Sciatic nerve (tissue), 2 donors: ENCODE measurements at regions of chr19 and their contacts with region 1.

Region 1: DNA sequence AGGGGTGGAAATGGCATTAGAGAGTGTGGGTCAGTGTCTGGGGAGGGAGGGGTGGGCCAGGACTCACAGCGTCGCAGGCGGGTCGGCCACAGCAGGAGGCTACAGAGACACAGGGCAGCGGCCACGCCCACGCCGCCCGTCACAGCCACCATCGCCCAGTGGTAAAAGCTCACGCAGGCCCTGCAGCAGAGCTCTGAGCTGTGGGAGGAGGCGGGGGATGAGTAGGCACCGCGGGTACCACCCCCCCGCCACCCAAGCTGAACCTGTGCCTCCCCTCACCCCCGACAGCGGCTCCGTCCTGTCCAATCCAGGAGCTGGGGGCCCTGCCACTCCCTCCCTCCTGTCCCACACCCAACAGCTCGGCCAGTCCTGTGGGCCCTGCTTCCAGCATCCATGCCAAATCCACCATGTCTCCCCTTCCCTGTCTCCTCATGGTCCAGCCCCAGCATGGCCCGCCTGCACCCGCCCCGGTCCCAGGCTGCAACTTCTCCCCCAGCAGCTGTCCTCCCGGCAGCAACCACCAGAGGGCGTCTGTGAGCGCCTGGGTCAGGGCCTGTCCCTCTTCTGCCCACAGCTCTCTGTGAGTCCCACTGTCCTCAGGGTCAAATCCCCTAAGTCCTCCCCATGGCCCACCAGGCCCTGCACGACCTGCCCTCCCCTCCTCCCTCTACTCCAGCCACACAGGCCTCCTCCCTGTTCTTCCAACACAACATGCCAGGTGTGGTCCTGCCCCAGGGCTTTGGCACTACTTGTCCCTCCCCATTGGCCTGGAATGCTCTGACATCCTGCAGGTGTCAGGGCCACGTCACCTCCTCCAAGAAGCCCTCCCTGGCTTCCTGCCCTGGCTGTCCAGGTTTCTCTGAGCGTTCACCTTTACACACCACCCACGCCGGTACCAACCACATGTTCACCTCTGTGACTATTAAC is 6.0 kb downstream of the TEKTIP1 start:
- DNase-seq: peak; percentile 88
- ATAC-seq: peak; percentile 59

Region 2: DNA sequence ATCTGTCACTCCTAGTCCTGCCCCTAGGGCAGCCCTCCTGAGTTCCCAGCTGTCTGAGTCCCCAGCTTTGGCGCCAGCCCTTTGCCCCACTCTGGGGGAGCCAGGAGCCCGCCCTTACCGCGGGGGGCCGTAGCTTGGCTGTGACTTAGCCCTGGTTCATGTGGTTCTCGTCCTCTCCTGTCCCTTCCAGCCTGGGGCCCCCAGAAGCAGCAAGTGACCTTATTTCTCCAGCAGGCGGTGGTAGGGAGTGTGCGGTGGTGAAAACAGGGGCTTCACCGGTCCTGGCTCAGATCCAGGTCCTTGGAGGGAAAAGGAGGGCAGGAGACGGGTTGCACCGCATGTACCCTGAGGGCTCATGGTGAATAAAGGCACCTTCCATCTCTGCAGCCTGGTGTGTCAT is 48.2 kb after region 1 on chr19:
- intact Hi-C with region 1: no loop called
- DNase-seq: no peak
- ATAC-seq: no peak

Region 3: DNA sequence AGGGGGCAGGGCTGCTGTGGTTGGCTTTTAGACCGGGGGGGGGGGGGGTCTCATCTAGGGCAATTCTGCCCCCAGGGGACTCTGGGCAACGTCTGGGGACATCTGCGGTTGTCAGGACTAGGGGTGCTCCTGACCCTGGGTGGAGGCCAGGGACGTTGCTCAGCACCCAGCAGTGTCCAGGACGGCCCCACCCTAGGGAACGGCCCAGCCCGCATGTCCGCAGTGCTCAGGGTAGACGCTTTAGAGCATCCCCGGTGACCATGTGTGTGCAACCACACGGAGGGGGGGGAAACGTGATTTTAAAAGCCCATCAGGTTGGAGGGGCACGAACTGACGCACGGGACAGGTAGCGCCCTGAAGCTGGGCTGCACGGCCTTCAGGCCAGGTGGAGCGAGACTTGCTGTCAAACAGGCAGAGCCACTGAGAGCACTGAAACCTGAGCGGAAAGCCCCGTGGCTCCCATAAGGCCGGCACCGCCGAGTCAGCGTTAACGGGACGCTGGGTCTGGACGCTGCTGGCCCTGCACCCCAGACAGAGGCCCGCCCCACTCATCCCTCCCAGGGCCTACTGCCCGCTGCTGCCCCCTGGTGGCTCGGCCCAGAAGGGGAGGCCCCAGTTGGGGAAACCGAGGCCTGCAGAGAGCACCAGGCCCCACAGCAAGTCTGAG is 73.3 kb after region 1 on chr19:
- intact Hi-C with region 1: loop called (anchors 10 kb)
- DNase-seq: peak; percentile 89
- ATAC-seq: peak; percentile 91